Naive thymus-derived CD4-positive, alpha-beta T cell (primary cell): ENCODE measurements at regions of chr2 and their contacts with region 1.

Region 1: DNA sequence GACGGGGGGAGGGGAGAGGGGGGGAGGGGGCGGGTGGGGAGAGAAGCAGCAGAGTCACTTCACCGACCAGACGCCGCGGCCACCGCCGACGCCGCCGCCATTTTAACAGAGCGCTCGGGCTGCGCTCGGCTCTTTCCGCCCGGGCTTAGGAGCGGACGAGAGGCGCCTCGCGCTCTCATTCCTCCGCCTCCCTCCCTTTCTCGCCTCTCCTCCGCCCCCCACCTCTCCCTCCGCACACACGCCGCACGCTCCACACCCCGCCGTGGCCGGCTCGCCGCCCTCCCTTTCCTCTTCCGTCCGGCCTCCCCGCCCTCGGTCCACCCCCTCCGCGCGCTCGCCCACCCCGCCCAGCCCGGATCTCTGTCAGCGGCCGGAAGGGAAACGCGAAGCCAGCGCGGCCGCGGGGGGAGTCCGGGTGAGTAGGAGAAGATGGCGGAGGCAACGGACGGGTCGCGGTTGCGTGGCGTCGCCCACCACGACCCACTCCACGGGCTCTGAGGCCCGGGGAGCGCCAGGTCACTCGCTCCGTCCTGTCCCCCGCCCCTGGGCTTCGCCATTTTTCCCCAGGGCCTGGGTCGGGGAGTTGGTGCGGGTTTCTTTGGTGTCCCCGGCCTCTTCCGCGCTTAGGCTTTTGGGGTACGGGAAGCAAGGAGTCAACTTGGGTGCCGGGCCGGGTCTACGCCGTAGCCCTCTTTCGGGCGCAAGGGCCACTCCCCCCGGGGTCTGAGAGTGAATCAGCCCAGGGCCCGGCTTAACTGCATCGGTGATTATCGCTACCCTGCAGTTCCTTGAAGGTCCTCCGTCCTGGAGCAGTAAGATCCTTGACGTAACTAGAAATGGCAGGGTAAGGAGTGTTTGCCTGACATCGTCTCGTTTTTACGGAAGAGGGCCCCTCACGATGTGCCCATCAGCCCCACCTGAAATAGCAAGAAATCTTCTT is at the start of gene USP34:
- DNase-seq: peak; percentile 77 to 93 (median 88)
- ATAC-seq: peak; percentile 91
- H3K4me3 ChIP-seq: peak within 1 kb of the TSS; percentile 97
- H3K4me3 Mint-ChIP-seq: peak within 1 kb of the TSS; percentile 85 to 99 (median 96)
- H3K27ac ChIP-seq: peak within 1 kb of the TSS; percentile 98
- H3K27ac Mint-ChIP-seq: peak within 1 kb of the TSS; percentile 96 to 99 (median 97)
- H3K4me1 ChIP-seq: peaks cover 14 to 27% of the 10 kb centered on the region in 2 donors
- H3K4me1 Mint-ChIP-seq: peaks cover 11 to 45% (median 33%) of the 10 kb centered on the region in 7 donors
- H3K27me3 ChIP-seq: no peaks in the 10 kb centered on the region
- H3K27me3 Mint-ChIP-seq: no peaks in the 10 kb centered on the region
- total RNA-seq, gene USP34: 109 to 186 (median 165) TPM

Region 2: GRCh38 chr2:60818272-60818671 is 653.0 kb before region 1 on chr2:
- CTCF ChIA-PET with region 1: no interaction called
- POLR2A ChIA-PET with region 1: no interaction called
- intact Hi-C with region 1: loop called in 1 of 2 experiments (anchors 5 kb)
- DNase-seq: peak in 2 of 9 donors; percentile 29 to 53
- ATAC-seq: no peak
- H3K4me3 ChIP-seq: no peak overlapping the region
- H3K4me3 Mint-ChIP-seq: peak overlapping the region in 2 of 10 donors; percentile 5 to 34
- H3K27ac ChIP-seq: no peak overlapping the region
- H3K27ac Mint-ChIP-seq: peak overlapping the region in 7 of 9 donors; percentile 28 to 92 (median 61)
- H3K4me1 ChIP-seq: peaks cover 24% of the 10 kb centered on the region in 2 donors
- H3K4me1 Mint-ChIP-seq: peaks cover 22 to 46% (median 37%) of the 10 kb centered on the region in 7 donors
- H3K27me3 ChIP-seq: no peaks in the 10 kb centered on the region
- H3K27me3 Mint-ChIP-seq: peaks cover 0 to 3% (median 0%) of the 10 kb centered on the region in 5 donors

Region 3: DNA sequence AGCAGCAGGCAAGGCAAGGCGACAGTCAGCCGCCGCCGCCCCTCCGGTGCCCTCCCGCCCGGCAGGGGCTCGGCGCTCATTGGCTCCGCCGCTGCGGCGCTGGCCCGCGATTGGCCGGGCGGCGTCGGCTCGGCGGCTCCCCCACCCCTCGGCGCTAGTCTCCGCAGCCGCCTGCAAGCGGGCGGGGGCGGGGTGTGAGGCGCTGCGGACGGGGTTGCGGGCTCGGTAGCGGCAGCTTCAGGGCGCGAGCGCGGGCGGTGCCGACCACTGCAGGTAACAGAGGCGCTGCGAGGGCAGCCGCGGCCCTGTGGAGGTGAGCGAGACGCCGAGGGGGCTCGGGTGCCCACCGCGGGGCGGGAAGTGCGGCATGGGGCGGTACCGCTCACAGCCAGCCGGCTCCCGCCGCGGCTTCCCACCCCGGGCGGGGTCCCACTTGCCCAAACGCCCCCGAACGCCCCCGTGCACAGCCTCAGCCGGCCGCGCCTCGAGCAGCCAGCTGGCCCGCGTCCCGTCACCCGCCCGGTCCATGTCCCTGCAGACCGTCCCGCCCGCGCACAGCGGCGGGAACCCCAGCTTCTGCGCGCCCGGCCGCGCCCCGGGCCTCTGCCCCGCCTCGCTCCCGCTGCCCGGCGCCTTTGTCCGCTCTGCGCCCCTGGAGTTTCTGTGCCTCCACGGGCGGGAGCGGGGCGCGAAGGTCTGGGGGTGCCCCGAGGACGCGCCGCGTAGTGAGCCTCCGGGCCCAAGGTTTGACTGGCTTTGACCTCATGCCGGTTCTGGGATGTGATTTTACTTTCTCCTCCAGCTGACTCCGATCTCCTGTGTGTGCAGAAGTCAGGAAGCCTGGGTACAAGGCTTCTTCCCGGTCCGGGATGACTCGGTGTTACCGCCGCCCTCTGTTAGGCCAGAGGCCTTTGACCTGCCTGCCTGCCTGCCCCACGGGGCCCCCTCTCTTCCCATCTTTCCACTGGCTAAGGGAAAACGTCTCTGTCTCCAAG is 405.2 kb before region 1 on chr2 and contains the start of gene SANBR:
- CTCF ChIA-PET with region 1: no interaction called
- POLR2A ChIA-PET with region 1: no interaction called
- intact Hi-C with region 1: loop called in 1 of 2 experiments (anchors 5 kb)
- DNase-seq: peak; percentile 78 to 90 (median 83)
- ATAC-seq: peak; percentile 99
- H3K4me3 ChIP-seq: peak within 1 kb of the TSS; percentile 59
- H3K4me3 Mint-ChIP-seq: peak within 1 kb of the TSS; percentile 79 to 98 (median 95)
- H3K27ac ChIP-seq: peak within 1 kb of the TSS; percentile 49
- H3K27ac Mint-ChIP-seq: peak within 1 kb of the TSS; percentile 12 to 94 (median 79)
- H3K4me1 ChIP-seq: peaks cover 0 to 6% of the 10 kb centered on the region in 2 donors
- H3K4me1 Mint-ChIP-seq: peaks cover 0 to 17% (median 5%) of the 10 kb centered on the region in 7 donors
- H3K27me3 ChIP-seq: no peaks in the 10 kb centered on the region
- H3K27me3 Mint-ChIP-seq: peaks cover 0 to 2% (median 0%) of the 10 kb centered on the region in 5 donors
- total RNA-seq, gene SANBR: 2.0 to 5.9 (median 3.6) TPM

Region 4: GRCh38 chr2:61176755-61177726 is 294.2 kb before region 1 on chr2:
- CTCF ChIA-PET with region 1: no interaction called
- POLR2A ChIA-PET with region 1: interaction called, 6 read pairs
- intact Hi-C with region 1: loop called (anchors 1 kb)
- DNase-seq: peak; percentile 89 to 97 (median 93)
- ATAC-seq: peak; percentile 95
- H3K4me3 ChIP-seq: peak overlapping the region; percentile 82
- H3K4me3 Mint-ChIP-seq: peak overlapping the region; percentile 90 to 100 (median 94)
- H3K27ac ChIP-seq: peak overlapping the region; percentile 97
- H3K27ac Mint-ChIP-seq: peak overlapping the region; percentile 89 to 97 (median 95)
- H3K4me1 ChIP-seq: peaks cover 27 to 41% of the 10 kb centered on the region in 2 donors
- H3K4me1 Mint-ChIP-seq: peaks cover 38 to 53% (median 48%) of the 10 kb centered on the region in 7 donors
- H3K27me3 ChIP-seq: no peaks in the 10 kb centered on the region
- H3K27me3 Mint-ChIP-seq: peaks cover 0 to 8% (median 0%) of the 10 kb centered on the region in 5 donors

Region 5: GRCh38 chr2:61340242-61340641 is 131.0 kb before region 1 on chr2:
- CTCF ChIA-PET with region 1: no interaction called
- POLR2A ChIA-PET with region 1: no interaction called
- intact Hi-C with region 1: no loop called
- DNase-seq: no peak
- ATAC-seq: no peak
- H3K4me3 ChIP-seq: no peak overlapping the region
- H3K4me3 Mint-ChIP-seq: no peak overlapping the region
- H3K27ac ChIP-seq: no peak overlapping the region
- H3K27ac Mint-ChIP-seq: no peak overlapping the region
- H3K4me1 ChIP-seq: no peaks in the 10 kb centered on the region
- H3K4me1 Mint-ChIP-seq: peaks cover 0 to 6% (median 0%) of the 10 kb centered on the region in 7 donors
- H3K27me3 ChIP-seq: no peaks in the 10 kb centered on the region
- H3K27me3 Mint-ChIP-seq: no peaks in the 10 kb centered on the region

Region 6: GRCh38 chr2:61456070-61456745 is 15.0 kb before region 1 on chr2:
- CTCF ChIA-PET with region 1: interaction called, 3 read pairs
- POLR2A ChIA-PET with region 1: interaction called, 7 read pairs
- intact Hi-C with region 1: loop called in 1 of 2 experiments (anchors 2 kb)
- DNase-seq: no peak
- ATAC-seq: no peak
- H3K4me3 ChIP-seq: no peak overlapping the region
- H3K4me3 Mint-ChIP-seq: peak overlapping the region in 5 of 10 donors; percentile 11 to 78 (median 56)
- H3K27ac ChIP-seq: no peak overlapping the region
- H3K27ac Mint-ChIP-seq: peak overlapping the region in 8 of 9 donors; percentile 1 to 84 (median 76)
- H3K4me1 ChIP-seq: peaks cover 24 to 42% of the 10 kb centered on the region in 2 donors
- H3K4me1 Mint-ChIP-seq: peaks cover 38 to 82% (median 67%) of the 10 kb centered on the region in 7 donors
- H3K27me3 ChIP-seq: no peaks in the 10 kb centered on the region
- H3K27me3 Mint-ChIP-seq: no peaks in the 10 kb centered on the region

Region 7: DNA sequence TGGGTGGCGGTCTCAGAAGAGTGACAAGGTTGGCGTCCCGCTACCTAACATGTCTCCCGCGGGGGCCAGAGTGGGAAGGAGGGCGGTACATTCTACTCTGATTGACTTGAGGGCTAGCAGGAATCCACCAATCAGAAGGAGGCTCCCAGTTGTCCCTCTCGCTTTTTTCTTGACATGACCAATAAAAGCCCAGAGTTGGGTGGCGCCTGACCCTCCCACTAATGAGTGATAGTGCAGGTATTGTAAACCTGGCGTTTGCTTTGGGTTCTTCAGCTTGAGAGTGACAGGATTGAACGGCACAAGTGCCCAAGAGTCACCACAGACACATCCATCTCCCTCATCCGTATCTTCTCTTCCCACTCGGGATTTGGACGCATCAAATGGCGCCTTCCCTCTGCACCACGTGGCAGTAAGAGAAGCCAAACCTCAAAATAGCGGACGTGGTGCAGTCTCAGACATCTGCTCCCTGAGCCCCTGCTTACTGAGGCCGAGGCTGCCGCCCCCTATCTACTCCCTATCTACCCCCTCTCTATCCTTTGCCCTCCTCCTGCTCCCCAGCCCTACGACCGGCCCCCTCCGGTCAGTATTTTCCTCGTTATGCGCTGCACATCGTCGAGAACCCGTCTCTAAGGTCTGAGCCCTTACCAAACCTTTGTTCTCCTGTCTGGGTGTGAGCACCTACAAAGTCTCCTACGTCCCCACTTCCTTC is 383.4 kb after region 1 on chr2:
- CTCF ChIA-PET with region 1: no interaction called
- POLR2A ChIA-PET with region 1: no interaction called
- intact Hi-C with region 1: loop called (anchors 1 kb)
- DNase-seq: peak; percentile 61 to 96 (median 94)
- ATAC-seq: peak; percentile 95
- H3K4me3 ChIP-seq: peak overlapping the region; percentile 100
- H3K4me3 Mint-ChIP-seq: peak overlapping the region; percentile 92 to 99 (median 96)
- H3K27ac ChIP-seq: peak overlapping the region; percentile 77
- H3K27ac Mint-ChIP-seq: peak overlapping the region; percentile 90 to 98 (median 95)
- H3K4me1 ChIP-seq: peaks cover 4 to 6% of the 10 kb centered on the region in 2 donors
- H3K4me1 Mint-ChIP-seq: peaks cover 10 to 27% (median 17%) of the 10 kb centered on the region in 7 donors
- H3K27me3 ChIP-seq: no peaks in the 10 kb centered on the region
- H3K27me3 Mint-ChIP-seq: no peaks in the 10 kb centered on the region